ENCODE measurements at regions of chr4 and their contacts with region 1.

Region 1: GRCh38 chr4:98150092-98150761 is 7.0 kb upstream of the STPG2 start:
- DNase-seq: peak; percentile 16
- ATAC-seq: peak; percentile 59
- H3K4me3 ChIP-seq: no peak overlapping the region
- H3K27ac ChIP-seq: peak overlapping the region; percentile 29; the same call in 1 of the 2 replicates
- H3K4me1 ChIP-seq: peaks cover 2% of the 10 kb centered on the region; the same call in 1 of the 2 replicates
- H3K27me3 ChIP-seq: no peaks in the 10 kb centered on the region
- CTCF ChIP-seq: peak; percentile 45
- POLR2A ChIP-seq: no peak
- RAD21 ChIP-seq: peak; percentile 50

Region 2: GRCh38 chr4:97279410-97279809 is 870.8 kb before region 1 on chr4:
- CTCF ChIA-PET with region 1: no interaction called
- POLR2A ChIA-PET with region 1: no interaction called
- dilution Hi-C with region 1: no loop called
- in situ Hi-C with region 1: no loop called
- intact Hi-C with region 1: no loop called
- DNase-seq: no peak
- ATAC-seq: no peak
- H3K4me3 ChIP-seq: no peak overlapping the region
- H3K27ac ChIP-seq: no peak overlapping the region
- H3K4me1 ChIP-seq: no peaks in the 10 kb centered on the region
- H3K27me3 ChIP-seq: no peaks in the 10 kb centered on the region
- CTCF ChIP-seq: no peak
- POLR2A ChIP-seq: no peak
- RAD21 ChIP-seq: no peak

Region 3: GRCh38 chr4:98851806-98852205 is 701.6 kb after region 1 on chr4:
- CTCF ChIA-PET with region 1: no interaction called
- POLR2A ChIA-PET with region 1: no interaction called
- dilution Hi-C with region 1: no loop called
- in situ Hi-C with region 1: no loop called
- intact Hi-C with region 1: loop called (anchors 2 kb)
- DNase-seq: peak; percentile 64
- ATAC-seq: peak; percentile 85
- H3K4me3 ChIP-seq: no peak overlapping the region
- H3K27ac ChIP-seq: no peak overlapping the region
- H3K4me1 ChIP-seq: peaks cover 4% of the 10 kb centered on the region; the same call in 1 of the 2 replicates
- H3K27me3 ChIP-seq: no peaks in the 10 kb centered on the region
- CTCF ChIP-seq: no peak
- POLR2A ChIP-seq: no peak
- RAD21 ChIP-seq: no peak

Measured in IMR-90 (cell line).